T-cell (primary cell): ENCODE measurements at regions of chr3 and their contacts with region 1.

Region 1: GRCh38 chr3:5197470-5198312 is 10.2 kb downstream of the EDEM1 start:
- DNase-seq: peak in 27 of 35 experiments; percentile 10 to 74 (median 35)
- ATAC-seq: peak; percentile 85 to 86 (median 86)
- H3K4me3 ChIP-seq: peak overlapping the region; percentile 5 to 22
- H3K4me3 Mint-ChIP-seq: peak overlapping the region; percentile 68 to 76 (median 73)
- H3K27ac ChIP-seq: peak overlapping the region; percentile 80
- H3K27ac Mint-ChIP-seq: peak overlapping the region; percentile 95 to 98
- H3K4me1 ChIP-seq: peaks cover 60 to 63% of the 10 kb centered on the region in 2 experiments
- H3K4me1 Mint-ChIP-seq: peaks cover 80 to 87% (median 82%) of the 10 kb centered on the region in 3 donors
- H3K27me3 ChIP-seq: no peaks in the 10 kb centered on the region
- H3K27me3 Mint-ChIP-seq: no peaks in the 10 kb centered on the region

Region 2: DNA sequence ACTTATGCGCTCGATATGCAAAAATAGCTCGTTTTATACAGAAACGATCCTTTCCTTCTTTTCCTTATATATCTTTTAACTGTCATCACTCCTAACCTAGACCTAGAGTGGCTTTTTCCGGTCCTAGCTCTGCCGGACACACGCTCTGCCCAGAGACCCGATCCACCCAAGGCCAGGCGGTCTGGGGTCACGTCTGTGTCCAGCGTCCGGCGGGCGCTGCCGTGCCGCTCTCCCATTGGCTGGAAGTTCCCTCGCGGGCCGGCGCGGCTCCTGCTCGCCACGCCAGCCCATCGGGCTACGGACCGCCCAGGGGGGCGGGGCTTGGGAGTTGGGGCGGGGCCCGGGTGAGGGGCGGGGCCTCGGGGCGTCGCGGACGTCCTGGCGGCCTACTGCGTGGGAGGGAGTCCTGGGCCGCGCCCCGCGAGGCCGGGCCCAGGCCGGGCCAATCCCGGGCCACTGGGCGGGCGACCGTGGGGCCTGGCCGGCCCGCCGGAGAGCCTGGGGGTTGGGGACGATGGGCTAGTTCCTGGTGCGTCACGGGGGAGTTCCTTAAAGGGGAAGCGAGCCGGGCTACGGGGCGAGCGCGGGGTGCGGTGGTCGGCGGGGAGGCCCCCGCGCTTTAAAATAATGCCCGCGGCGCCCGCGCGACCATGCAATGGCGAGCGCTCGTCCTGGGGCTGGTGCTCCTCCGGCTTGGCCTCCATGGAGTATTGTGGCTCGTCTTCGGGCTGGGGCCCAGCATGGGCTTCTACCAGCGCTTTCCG is 10.4 kb before region 1 on chr3 and contains the start of gene EDEM1:
- CTCF ChIA-PET with region 1: interaction called in 1 of 2 experiments, 23 read pairs
- POLR2A ChIA-PET with region 1: interaction called, 3 to 26 read pairs
- DNase-seq: peak; percentile 76 to 99 (median 88)
- ATAC-seq: peak; percentile 88 to 90 (median 88)
- H3K4me3 ChIP-seq: peak within 1 kb of the TSS; percentile 76 to 86
- H3K4me3 Mint-ChIP-seq: peak within 1 kb of the TSS; percentile 94 to 99 (median 98)
- H3K27ac ChIP-seq: peak within 1 kb of the TSS; percentile 96
- H3K27ac Mint-ChIP-seq: peak within 1 kb of the TSS; percentile 99 to 100
- H3K4me1 ChIP-seq: peaks cover 15 to 25% of the 10 kb centered on the region in 2 experiments
- H3K4me1 Mint-ChIP-seq: peaks cover 35 to 40% (median 37%) of the 10 kb centered on the region in 3 donors
- H3K27me3 ChIP-seq: no peaks in the 10 kb centered on the region
- H3K27me3 Mint-ChIP-seq: no peaks in the 10 kb centered on the region
- total RNA-seq, gene EDEM1: 92.6 to 138 (median 113) TPM

Region 3: DNA sequence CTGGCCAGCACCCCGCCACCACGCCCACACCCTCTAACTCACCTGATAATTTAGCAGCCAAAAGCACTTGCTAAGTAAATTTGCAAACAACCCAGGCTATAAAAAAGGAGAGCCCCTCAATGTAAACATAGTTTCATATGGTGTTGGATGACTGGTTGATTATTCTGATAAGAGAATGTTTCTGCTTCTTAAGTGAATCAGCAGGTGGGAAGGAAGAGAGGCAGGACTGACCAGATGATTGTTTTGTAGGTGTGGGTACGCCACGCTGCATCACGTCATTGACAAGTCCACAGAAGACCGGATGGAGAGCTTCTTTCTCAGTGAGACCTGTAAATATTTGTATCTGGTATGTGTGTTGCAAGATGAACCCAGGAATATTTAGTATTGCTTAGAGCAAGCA is 13.2 kb after region 1 on chr3:
- CTCF ChIA-PET with region 1: no interaction called
- POLR2A ChIA-PET with region 1: no interaction called
- DNase-seq: no peak
- ATAC-seq: no peak
- H3K4me3 ChIP-seq: no peak overlapping the region
- H3K4me3 Mint-ChIP-seq: no peak overlapping the region
- H3K27ac ChIP-seq: no peak overlapping the region
- H3K27ac Mint-ChIP-seq: no peak overlapping the region
- H3K4me1 ChIP-seq: no peaks in the 10 kb centered on the region
- H3K4me1 Mint-ChIP-seq: peaks cover 11 to 15% (median 11%) of the 10 kb centered on the region in 3 donors
- H3K27me3 ChIP-seq: no peaks in the 10 kb centered on the region
- H3K27me3 Mint-ChIP-seq: no peaks in the 10 kb centered on the region

Region 4: DNA sequence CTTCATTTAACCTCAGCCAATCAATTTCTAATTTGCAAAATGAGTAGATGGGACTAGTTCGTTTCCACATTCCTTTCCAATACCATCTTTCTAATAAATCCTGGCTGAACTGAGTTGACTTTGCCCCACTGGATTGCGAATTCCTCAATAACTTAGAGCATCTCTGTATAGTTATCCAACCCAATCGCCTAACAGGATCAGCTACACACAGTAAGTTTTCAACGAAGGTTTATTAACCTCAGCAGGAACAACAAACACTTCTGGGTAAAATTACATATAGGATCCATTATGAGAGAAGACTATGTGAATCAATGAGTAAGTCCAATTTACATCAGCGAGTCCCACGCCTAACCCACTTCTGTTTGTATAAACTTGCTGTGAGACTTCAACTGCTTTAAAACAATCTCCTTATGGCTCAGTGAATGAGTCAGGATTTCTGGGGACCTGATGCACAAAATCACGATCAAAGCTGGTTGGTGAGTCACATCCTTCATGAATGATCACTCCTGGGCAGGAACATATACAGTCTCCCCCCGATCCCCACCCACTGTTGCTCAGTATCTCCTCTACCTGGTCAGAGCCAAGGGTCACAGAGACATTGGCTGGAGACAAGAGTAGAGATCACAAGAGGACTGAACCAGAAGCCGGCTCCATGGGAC is 132.6 kb after region 1 on chr3:
- CTCF ChIA-PET with region 1: no interaction called
- POLR2A ChIA-PET with region 1: no interaction called
- DNase-seq: no peak
- ATAC-seq: no peak
- H3K4me3 ChIP-seq: no peak overlapping the region
- H3K4me3 Mint-ChIP-seq: no peak overlapping the region
- H3K27ac ChIP-seq: no peak overlapping the region
- H3K27ac Mint-ChIP-seq: no peak overlapping the region
- H3K4me1 ChIP-seq: no peaks in the 10 kb centered on the region
- H3K4me1 Mint-ChIP-seq: no peaks in the 10 kb centered on the region
- H3K27me3 ChIP-seq: peaks cover 0 to 3% of the 10 kb centered on the region in 2 experiments
- H3K27me3 Mint-ChIP-seq: peaks cover 6 to 9% of the 10 kb centered on the region in 2 donors